Right ventricle myocardium superior (tissue), 1 donor: ENCODE measurements at regions of chr14 and their contacts with region 1.

Region 1: DNA sequence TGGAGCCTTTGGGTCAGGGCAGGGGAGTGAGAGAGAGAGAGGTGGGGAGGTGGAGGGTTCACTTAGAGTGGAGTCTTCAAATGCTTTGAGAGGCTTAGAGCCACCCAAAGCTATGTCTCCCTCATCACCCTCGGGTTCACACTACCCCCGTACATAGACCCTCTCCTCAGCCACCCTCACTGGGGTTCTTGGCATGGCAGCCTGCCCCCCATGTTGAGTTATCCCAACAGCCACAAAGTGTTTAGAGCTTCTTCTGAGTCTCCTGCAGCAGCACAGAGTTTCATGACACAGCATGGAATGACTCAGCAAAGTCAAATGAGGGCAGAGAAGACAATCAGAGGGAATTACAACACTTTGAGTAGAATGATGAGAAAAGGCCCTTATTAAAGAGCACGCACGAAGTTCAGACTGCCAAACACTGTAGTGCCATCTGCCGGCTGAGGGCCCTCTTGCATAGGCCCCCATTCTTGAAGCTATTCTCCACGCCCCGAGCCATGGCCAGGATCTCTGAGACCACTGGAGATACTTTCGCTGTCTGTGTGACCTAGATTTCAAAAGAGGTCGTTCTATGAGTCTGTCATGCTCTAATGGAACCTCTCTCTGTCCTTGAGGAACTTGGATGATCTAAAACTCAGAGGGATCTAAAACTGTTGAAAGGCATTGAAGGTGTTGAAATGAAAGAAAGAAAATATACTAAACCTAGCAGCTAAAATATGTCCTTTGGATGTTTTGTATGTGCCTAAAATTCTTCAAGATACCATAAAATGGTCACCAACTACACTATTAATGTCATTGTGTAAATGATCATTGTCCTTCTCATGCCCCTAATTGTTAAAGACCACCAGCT is 221.9 kb downstream of the PELI2 start:
- DNase-seq: peak; percentile 87
- ATAC-seq: peak; percentile 95

Region 2: GRCh38 chr14:55715889-55716288 is 624.2 kb before region 1 on chr14:
- intact Hi-C with region 1: loop called (anchors 10 kb)
- DNase-seq: no peak
- ATAC-seq: peak; percentile 71

Region 3: DNA sequence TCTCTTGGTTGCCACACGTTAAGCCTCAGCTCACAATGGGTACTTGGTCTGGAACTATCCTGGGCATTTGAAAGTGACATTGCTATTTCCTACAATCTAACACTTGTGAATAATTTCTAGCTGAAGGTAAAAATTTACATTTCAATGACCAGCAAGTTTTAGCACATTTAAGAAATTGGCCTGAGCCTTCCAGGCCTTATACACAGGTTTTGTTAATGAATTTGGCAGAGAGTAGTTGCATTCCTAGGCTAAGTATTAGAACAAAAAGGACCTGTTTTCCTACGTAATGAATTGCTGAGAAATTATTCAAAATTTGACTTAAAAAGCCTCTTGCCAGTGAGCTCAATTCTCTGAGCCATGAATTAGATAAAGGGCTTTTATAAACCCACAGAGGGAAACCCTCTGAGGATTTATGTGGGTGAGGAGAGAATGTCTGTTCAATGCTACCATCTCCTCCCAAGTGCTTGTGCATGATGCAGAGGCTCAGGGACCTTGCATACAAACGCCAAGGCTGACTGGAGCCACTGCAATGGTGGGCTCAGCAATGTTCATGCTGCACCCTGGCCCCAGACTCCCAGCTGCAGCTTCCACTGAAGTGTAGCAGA is 316.4 kb before region 1 on chr14:
- intact Hi-C with region 1: no loop called
- DNase-seq: no peak
- ATAC-seq: no peak

Region 4: DNA sequence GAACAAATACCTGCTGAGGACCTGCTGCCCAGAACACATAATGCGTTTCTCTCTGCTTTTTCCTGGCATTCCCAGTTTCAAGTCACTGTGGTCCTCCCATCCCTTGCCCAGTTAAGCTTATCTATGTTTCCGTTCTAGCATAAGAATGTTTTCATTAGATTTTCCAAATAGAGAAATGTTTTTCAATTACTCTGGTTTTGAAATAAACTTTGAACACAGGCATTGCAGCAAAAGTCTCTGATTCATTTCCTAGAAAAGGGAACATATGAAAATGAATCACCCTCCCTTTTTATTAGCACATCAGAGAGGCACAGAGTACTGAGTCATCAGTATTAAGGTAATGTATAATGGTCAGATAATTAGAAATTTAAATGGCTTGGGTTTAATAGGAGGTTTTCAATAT is 38.4 kb after region 1 on chr14:
- intact Hi-C with region 1: no loop called
- DNase-seq: no peak
- ATAC-seq: no peak